MCF 10A (cell line): ENCODE measurements at regions of chr11 and their contacts with region 1.

Region 1: GRCh38 chr11:19995131-19995530 is 165.1 kb downstream of the DBX1 start:
- DNase-seq: peak; percentile 95
- H3K4me3 Mint-ChIP-seq: peak overlapping the region; percentile 73
- H3K27ac Mint-ChIP-seq: peak overlapping the region; percentile 99
- H3K4me1 Mint-ChIP-seq: peaks cover 36% of the 10 kb centered on the region
- H3K27me3 Mint-ChIP-seq: no peaks in the 10 kb centered on the region
- CTCF ChIP-seq: no peak

Region 2: GRCh38 chr11:19714387-19715363 is 280.5 kb before region 1 on chr11:
- CTCF ChIA-PET with region 1: no interaction called
- POLR2A ChIA-PET with region 1: no interaction called
- intact Hi-C with region 1: no loop called
- DNase-seq: peak; percentile 72
- H3K4me3 Mint-ChIP-seq: peak overlapping the region; percentile 85
- H3K27ac Mint-ChIP-seq: peak overlapping the region; percentile 33
- H3K4me1 Mint-ChIP-seq: peaks cover 35% of the 10 kb centered on the region
- H3K27me3 Mint-ChIP-seq: no peaks in the 10 kb centered on the region
- CTCF ChIP-seq: no peak

Region 3: GRCh38 chr11:19978668-19979518 is 16.2 kb before region 1 on chr11:
- CTCF ChIA-PET with region 1: interaction called, 13 read pairs
- POLR2A ChIA-PET with region 1: interaction called, 104 read pairs
- intact Hi-C with region 1: no loop called
- DNase-seq: peak; percentile 91
- H3K4me3 Mint-ChIP-seq: peak overlapping the region; percentile 37
- H3K27ac Mint-ChIP-seq: peak overlapping the region; percentile 96
- H3K4me1 Mint-ChIP-seq: peaks cover 41% of the 10 kb centered on the region
- H3K27me3 Mint-ChIP-seq: no peaks in the 10 kb centered on the region
- CTCF ChIP-seq: no peak

Region 4: DNA sequence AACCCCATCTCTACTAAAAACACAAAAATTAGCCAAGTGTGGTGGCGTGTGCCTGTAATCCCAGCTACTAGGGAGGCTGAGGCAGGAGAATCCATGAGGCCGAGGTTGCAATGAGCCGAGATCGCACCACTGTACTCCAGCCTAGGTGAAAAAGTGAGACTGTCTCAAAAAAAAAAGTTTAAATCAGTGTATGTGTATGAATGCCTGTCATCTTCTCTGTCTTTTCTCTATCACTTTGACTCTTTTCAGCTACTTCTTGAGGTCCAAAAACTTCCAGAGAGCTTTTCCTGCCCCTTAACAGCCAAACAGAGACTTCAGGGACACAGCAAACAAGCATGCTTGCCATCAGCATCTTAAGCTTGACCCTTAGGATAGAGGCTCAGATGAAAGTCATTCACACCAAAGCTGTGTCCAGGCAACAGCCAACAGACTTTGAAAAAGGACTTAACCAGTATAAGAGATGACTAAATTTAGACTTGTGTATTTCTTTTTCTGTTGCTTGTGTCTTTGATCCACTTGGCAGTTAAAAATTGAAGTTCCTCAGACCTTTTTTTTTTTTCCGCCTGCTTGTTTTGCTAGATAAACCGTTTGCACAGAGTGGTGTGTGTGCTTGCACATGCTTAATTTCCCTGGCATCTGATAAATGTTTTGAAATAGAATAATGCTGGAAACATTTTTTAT is 13.2 kb after region 1 on chr11:
- CTCF ChIA-PET with region 1: interaction called, 17 read pairs
- POLR2A ChIA-PET with region 1: interaction called, 165 read pairs
- intact Hi-C with region 1: loop called (anchors 1 kb)
- DNase-seq: no peak
- H3K4me3 Mint-ChIP-seq: no peak overlapping the region
- H3K27ac Mint-ChIP-seq: no peak overlapping the region
- H3K4me1 Mint-ChIP-seq: peaks cover 24% of the 10 kb centered on the region
- H3K27me3 Mint-ChIP-seq: no peaks in the 10 kb centered on the region
- CTCF ChIP-seq: no peak

Region 5: GRCh38 chr11:20050551-20051333 is 55.6 kb after region 1 on chr11:
- CTCF ChIA-PET with region 1: interaction called, 3 read pairs
- POLR2A ChIA-PET with region 1: interaction called, 19 read pairs
- intact Hi-C with region 1: no loop called
- DNase-seq: peak; percentile 77
- H3K4me3 Mint-ChIP-seq: peak overlapping the region; percentile 30
- H3K27ac Mint-ChIP-seq: peak overlapping the region; percentile 93
- H3K4me1 Mint-ChIP-seq: peaks cover 66% of the 10 kb centered on the region
- H3K27me3 Mint-ChIP-seq: no peaks in the 10 kb centered on the region
- CTCF ChIP-seq: no peak

Region 6: GRCh38 chr11:20056109-20056949 is 61.2 kb after region 1 on chr11:
- CTCF ChIA-PET with region 1: interaction called, 6 read pairs
- POLR2A ChIA-PET with region 1: interaction called, 19 read pairs
- intact Hi-C with region 1: no loop called
- DNase-seq: peak; percentile 92
- H3K4me3 Mint-ChIP-seq: peak overlapping the region; percentile 26
- H3K27ac Mint-ChIP-seq: peak overlapping the region; percentile 90
- H3K4me1 Mint-ChIP-seq: peaks cover 67% of the 10 kb centered on the region
- H3K27me3 Mint-ChIP-seq: no peaks in the 10 kb centered on the region
- CTCF ChIP-seq: no peak